ENCODE measurements at regions of chr12 and their contacts with region 1.

Region 1: GRCh38 chr12:108562348-108563135 is at the start of gene ISCU:
- DNase-seq: peak; percentile 97 to 100 (median 99)
- ATAC-seq: peak; percentile 84
- H3K4me3 ChIP-seq: peak within 1 kb of the TSS; percentile 96
- H3K4me3 Mint-ChIP-seq: peak within 1 kb of the TSS; percentile 94 to 100 (median 100)
- H3K27ac ChIP-seq: peak within 1 kb of the TSS; percentile 98
- H3K27ac Mint-ChIP-seq: peak within 1 kb of the TSS; percentile 98 to 100 (median 99)
- H3K4me1 ChIP-seq: peaks cover 27 to 46% of the 10 kb centered on the region in 2 donors
- H3K4me1 Mint-ChIP-seq: peaks cover 26 to 76% (median 63%) of the 10 kb centered on the region in 7 donors
- H3K27me3 ChIP-seq: no peaks in the 10 kb centered on the region
- H3K27me3 Mint-ChIP-seq: no peaks in the 10 kb centered on the region
- total RNA-seq, gene ISCU: 51.7 to 212 (median 191) TPM

Region 2: GRCh38 chr12:107685360-107686248 is 876.9 kb before region 1 on chr12 and contains the start of gene PWP1:
- CTCF ChIA-PET with region 1: no interaction called
- POLR2A ChIA-PET with region 1: no interaction called
- intact Hi-C with region 1: loop called (anchors 1 to 5 kb)
- DNase-seq: peak; percentile 93 to 97 (median 95)
- ATAC-seq: peak; percentile 93
- H3K4me3 ChIP-seq: peak within 1 kb of the TSS; percentile 78
- H3K4me3 Mint-ChIP-seq: peak within 1 kb of the TSS; percentile 90 to 99 (median 95)
- H3K27ac ChIP-seq: peak within 1 kb of the TSS; percentile 88
- H3K27ac Mint-ChIP-seq: peak within 1 kb of the TSS; percentile 90 to 99 (median 97)
- H3K4me1 ChIP-seq: peaks cover 12 to 19% of the 10 kb centered on the region in 2 donors
- H3K4me1 Mint-ChIP-seq: peaks cover 23 to 40% (median 35%) of the 10 kb centered on the region in 7 donors
- H3K27me3 ChIP-seq: no peaks in the 10 kb centered on the region
- H3K27me3 Mint-ChIP-seq: peaks cover 0 to 3% (median 0%) of the 10 kb centered on the region in 5 donors
- total RNA-seq, gene PWP1: 20.9 to 42.5 (median 25.7) TPM

Region 3: GRCh38 chr12:108156717-108157116 is 405.8 kb before region 1 on chr12:
- CTCF ChIA-PET with region 1: no interaction called
- POLR2A ChIA-PET with region 1: no interaction called
- intact Hi-C with region 1: no loop called
- DNase-seq: no peak
- ATAC-seq: no peak
- H3K4me3 ChIP-seq: no peak overlapping the region
- H3K4me3 Mint-ChIP-seq: no peak overlapping the region
- H3K27ac ChIP-seq: no peak overlapping the region
- H3K27ac Mint-ChIP-seq: no peak overlapping the region
- H3K4me1 ChIP-seq: no peaks in the 10 kb centered on the region
- H3K4me1 Mint-ChIP-seq: no peaks in the 10 kb centered on the region
- H3K27me3 ChIP-seq: no peaks in the 10 kb centered on the region
- H3K27me3 Mint-ChIP-seq: peaks cover 0 to 35% (median 23%) of the 10 kb centered on the region in 5 donors

Region 4: DNA sequence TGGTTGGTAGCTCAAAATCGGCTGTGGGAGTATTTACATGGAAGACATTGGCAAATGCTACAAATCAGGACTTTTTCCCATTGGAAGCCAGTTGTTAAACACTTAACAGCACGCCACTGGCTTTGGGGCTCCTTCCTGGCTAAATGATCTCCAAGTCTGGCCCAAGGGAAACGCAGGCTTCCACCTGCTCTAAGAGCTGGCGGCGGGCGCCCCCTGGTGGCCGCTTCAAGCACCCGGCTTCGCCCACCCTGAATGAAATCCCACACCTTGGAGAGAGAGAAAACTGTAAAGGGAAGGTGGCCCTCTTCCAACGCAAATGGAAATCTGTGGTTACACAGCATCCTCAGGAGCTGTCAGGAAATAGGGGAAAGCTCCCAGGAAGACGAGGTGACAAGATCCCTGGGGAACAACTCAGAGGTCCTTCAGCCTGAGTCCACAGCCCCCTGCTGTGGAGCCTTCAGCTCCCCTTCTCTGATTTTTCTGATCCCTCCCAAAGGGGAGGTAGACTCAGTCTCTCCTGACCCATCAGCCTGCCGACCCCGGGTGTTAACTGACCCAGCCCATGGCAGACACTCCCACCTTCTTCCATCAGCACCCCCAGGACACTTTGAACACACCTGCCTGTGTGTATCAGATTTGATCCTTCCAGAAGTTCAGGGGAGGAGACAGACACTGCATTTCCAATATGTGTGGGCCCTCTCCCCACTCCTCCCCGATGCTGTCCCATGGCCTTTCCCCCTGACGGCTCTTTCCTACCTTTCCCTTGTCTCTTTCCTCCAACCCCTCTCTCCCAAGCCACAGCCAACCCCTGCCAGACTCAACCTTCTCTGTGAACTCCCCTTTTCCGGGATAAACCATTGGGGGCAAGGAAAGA is 55.8 kb after region 1 on chr12:
- CTCF ChIA-PET with region 1: interaction called, 119 read pairs
- POLR2A ChIA-PET with region 1: interaction called, 110 read pairs
- intact Hi-C with region 1: loop called (anchors 1 kb)
- DNase-seq: peak; percentile 61 to 81 (median 74)
- ATAC-seq: peak; percentile 72
- H3K4me3 ChIP-seq: no peak overlapping the region
- H3K4me3 Mint-ChIP-seq: peak overlapping the region in 8 of 10 donors; percentile 13 to 54 (median 34)
- H3K27ac ChIP-seq: peak overlapping the region; percentile 65
- H3K27ac Mint-ChIP-seq: peak overlapping the region; percentile 67 to 92 (median 79)
- H3K4me1 ChIP-seq: peaks cover 34 to 42% of the 10 kb centered on the region in 2 donors
- H3K4me1 Mint-ChIP-seq: peaks cover 44 to 72% (median 64%) of the 10 kb centered on the region in 7 donors
- H3K27me3 ChIP-seq: no peaks in the 10 kb centered on the region
- H3K27me3 Mint-ChIP-seq: no peaks in the 10 kb centered on the region

Region 5: DNA sequence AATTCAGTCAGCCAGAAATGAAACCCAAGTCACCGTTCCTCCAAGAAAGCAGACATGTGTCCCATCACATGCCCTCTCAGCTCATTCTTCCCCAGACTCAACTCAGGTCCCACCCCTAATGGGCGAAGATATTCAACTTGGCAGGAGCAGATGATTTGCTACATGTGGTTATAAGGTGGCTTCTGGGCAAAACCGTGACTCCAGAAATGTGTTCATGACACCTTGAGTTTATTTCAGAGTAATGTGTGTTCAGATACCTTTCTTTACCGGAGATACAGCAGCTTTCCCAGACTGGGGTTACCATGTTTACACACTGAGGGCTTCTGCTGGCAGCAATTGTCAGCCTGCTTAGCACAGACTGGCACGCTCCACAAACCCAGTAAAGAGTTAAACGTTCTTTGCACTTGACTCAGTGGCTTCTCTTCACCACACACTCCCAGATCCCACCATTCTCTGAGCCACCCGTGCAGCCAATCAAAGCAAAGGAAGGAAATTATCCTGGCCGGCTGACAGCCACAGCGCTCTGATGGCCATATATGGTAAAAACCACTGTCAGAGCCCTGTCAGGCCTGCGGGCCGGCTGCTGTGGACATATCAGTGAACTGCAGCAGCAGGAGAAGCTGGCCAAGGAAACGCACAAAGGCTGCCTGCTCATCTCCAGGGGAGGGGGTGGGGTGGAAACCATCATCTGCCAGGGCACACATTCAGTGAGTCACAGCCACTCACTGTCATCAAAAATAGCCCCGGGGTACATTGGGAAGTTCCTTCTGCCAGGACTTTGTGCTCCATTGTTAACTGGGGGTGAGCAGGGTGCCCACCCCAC is 128.8 kb after region 1 on chr12:
- CTCF ChIA-PET with region 1: no interaction called
- POLR2A ChIA-PET with region 1: interaction called, 4 read pairs
- intact Hi-C with region 1: loop called in 1 of 2 experiments (anchors 1 kb)
- DNase-seq: peak in 8 of 9 donors; percentile 5 to 57 (median 20)
- ATAC-seq: peak; percentile 87
- H3K4me3 ChIP-seq: peak overlapping the region; percentile 43
- H3K4me3 Mint-ChIP-seq: peak overlapping the region; percentile 58 to 77 (median 70)
- H3K27ac ChIP-seq: no peak overlapping the region
- H3K27ac Mint-ChIP-seq: peak overlapping the region in 7 of 9 donors; percentile 1 to 86 (median 53)
- H3K4me1 ChIP-seq: peaks cover 28 to 32% of the 10 kb centered on the region in 2 donors
- H3K4me1 Mint-ChIP-seq: peaks cover 42 to 65% (median 63%) of the 10 kb centered on the region in 7 donors
- H3K27me3 ChIP-seq: no peaks in the 10 kb centered on the region
- H3K27me3 Mint-ChIP-seq: no peaks in the 10 kb centered on the region

Region 6: GRCh38 chr12:108950991-108951739 is 388.6 kb after region 1 on chr12:
- CTCF ChIA-PET with region 1: no interaction called
- POLR2A ChIA-PET with region 1: interaction called, 3 read pairs
- intact Hi-C with region 1: loop called (anchors 1 kb)
- DNase-seq: peak; percentile 49 to 70 (median 63)
- ATAC-seq: peak; percentile 94
- H3K4me3 ChIP-seq: no peak overlapping the region
- H3K4me3 Mint-ChIP-seq: no peak overlapping the region
- H3K27ac ChIP-seq: no peak overlapping the region
- H3K27ac Mint-ChIP-seq: peak overlapping the region in 1 of 9 donors; percentile 4
- H3K4me1 ChIP-seq: no peaks in the 10 kb centered on the region
- H3K4me1 Mint-ChIP-seq: peaks cover 0 to 6% (median 4%) of the 10 kb centered on the region in 7 donors
- H3K27me3 ChIP-seq: no peaks in the 10 kb centered on the region
- H3K27me3 Mint-ChIP-seq: peaks cover 7 to 24% (median 17%) of the 10 kb centered on the region in 5 donors

Region 7: GRCh38 chr12:109154451-109155438 is 592.2 kb after region 1 on chr12:
- CTCF ChIA-PET with region 1: no interaction called
- POLR2A ChIA-PET with region 1: no interaction called
- intact Hi-C with region 1: loop called in 1 of 2 experiments (anchors 1 kb)
- DNase-seq: peak; percentile 58 to 87 (median 76)
- ATAC-seq: peak; percentile 99
- H3K4me3 ChIP-seq: peak overlapping the region; percentile 73
- H3K4me3 Mint-ChIP-seq: peak overlapping the region; percentile 85 to 98 (median 95)
- H3K27ac ChIP-seq: peak overlapping the region; percentile 61
- H3K27ac Mint-ChIP-seq: peak overlapping the region; percentile 71 to 95 (median 87)
- H3K4me1 ChIP-seq: peaks cover 5 to 10% of the 10 kb centered on the region in 2 donors
- H3K4me1 Mint-ChIP-seq: peaks cover 13 to 33% (median 19%) of the 10 kb centered on the region in 7 donors
- H3K27me3 ChIP-seq: no peaks in the 10 kb centered on the region
- H3K27me3 Mint-ChIP-seq: peaks cover 0 to 19% (median 0%) of the 10 kb centered on the region in 5 donors